OCI-LY7 (cell line): ENCODE measurements at regions of chr2 and their contacts with region 1.

Region 1: GRCh38 chr2:228771774-228772173 is 499.3 kb downstream of the PID1 start:
- DNase-seq: no peak
- H3K4me3 ChIP-seq: no peak overlapping the region
- H3K27ac ChIP-seq: no peak overlapping the region
- H3K4me1 ChIP-seq: no peaks in the 10 kb centered on the region
- CTCF ChIP-seq: no peak

Region 2: GRCh38 chr2:228629251-228629650 is 142.5 kb before region 1 on chr2:
- CTCF ChIA-PET with region 1: no interaction called
- POLR2A ChIA-PET with region 1: interaction called, 13 read pairs
- intact Hi-C with region 1: no loop called
- DNase-seq: no peak
- H3K4me3 ChIP-seq: no peak overlapping the region
- H3K27ac ChIP-seq: no peak overlapping the region
- H3K4me1 ChIP-seq: no peaks in the 10 kb centered on the region
- CTCF ChIP-seq: no peak